GM23248 (cell line): ENCODE measurements at regions of chr3 and their contacts with region 1.

Region 1: GRCh38 chr3:72270072-72270681 is 485.2 kb upstream of the PROK2 start:
- DNase-seq: peak; percentile 97
- H3K4me3 ChIP-seq: peak overlapping the region; percentile 9; the same call in 1 of the 2 replicates
- H3K27ac ChIP-seq: peak overlapping the region; percentile 47
- H3K4me1 ChIP-seq: peaks cover 35% of the 10 kb centered on the region
- H3K27me3 ChIP-seq: no peaks in the 10 kb centered on the region

Region 2: DNA sequence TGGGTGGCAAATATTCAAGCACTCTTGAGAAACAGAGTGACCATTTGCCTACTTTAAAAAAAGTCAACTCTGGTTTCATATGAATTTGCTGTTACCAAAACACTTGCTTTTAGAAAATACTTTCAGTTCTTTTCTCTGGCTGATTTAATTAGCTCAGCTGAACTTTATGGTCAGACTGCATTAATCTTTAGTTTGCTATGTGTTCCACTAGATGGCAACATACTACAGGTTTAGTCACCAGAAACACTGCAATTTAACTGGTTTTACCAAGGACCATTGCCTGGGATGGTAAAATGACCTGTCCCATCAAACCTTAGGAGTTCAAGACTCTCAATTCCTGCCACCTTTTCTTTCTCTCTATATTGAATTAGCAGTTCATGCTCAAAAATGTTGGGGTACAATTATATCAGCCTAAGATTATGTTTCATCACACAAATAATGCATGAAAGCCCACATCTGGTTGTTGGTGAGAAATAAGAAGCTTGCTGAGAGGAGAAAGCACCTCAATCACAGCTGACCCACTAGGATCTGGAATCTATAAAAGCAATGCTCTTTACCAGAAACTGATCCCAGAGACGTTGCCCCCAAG is 559.2 kb before region 1 on chr3:
- in situ Hi-C with region 1: loop called (anchors 25 kb)
- DNase-seq: peak; percentile 80
- H3K4me3 ChIP-seq: no peak overlapping the region
- H3K27ac ChIP-seq: no peak overlapping the region
- H3K4me1 ChIP-seq: peaks cover 10% of the 10 kb centered on the region
- H3K27me3 ChIP-seq: no peaks in the 10 kb centered on the region

Region 3: GRCh38 chr3:71955240-71956068 is 314.7 kb before region 1 on chr3:
- in situ Hi-C with region 1: loop called (anchors 10 kb)
- DNase-seq: peak; percentile 89
- H3K4me3 ChIP-seq: no peak overlapping the region
- H3K27ac ChIP-seq: no peak overlapping the region
- H3K4me1 ChIP-seq: peaks cover 4% of the 10 kb centered on the region
- H3K27me3 ChIP-seq: no peaks in the 10 kb centered on the region

Region 4: GRCh38 chr3:72163809-72164634 is 106.2 kb before region 1 on chr3:
- in situ Hi-C with region 1: no loop called
- DNase-seq: no peak
- H3K4me3 ChIP-seq: no peak overlapping the region
- H3K27ac ChIP-seq: no peak overlapping the region
- H3K4me1 ChIP-seq: peaks cover 8% of the 10 kb centered on the region
- H3K27me3 ChIP-seq: no peaks in the 10 kb centered on the region